ENCODE measurements at regions of chr6 and their contacts with region 1.

Region 1: GRCh38 chr6:53794720-53795253 is at the start of gene LRRC1:
- DNase-seq: peak; percentile 86
- H3K4me3 Mint-ChIP-seq: peak within 1 kb of the TSS; percentile 96
- H3K27ac Mint-ChIP-seq: peak within 1 kb of the TSS; percentile 78
- H3K4me1 Mint-ChIP-seq: peaks cover 41% of the 10 kb centered on the region
- H3K27me3 Mint-ChIP-seq: peaks cover 53% of the 10 kb centered on the region
- total RNA-seq, gene LRRC1: 1.7 and 1.9 TPM in 2 replicates

Region 2: GRCh38 chr6:53492860-53493634 is 301.7 kb before region 1 on chr6:
- intact Hi-C with region 1: loop called (anchors 1 kb)
- DNase-seq: no peak
- H3K4me3 Mint-ChIP-seq: no peak overlapping the region
- H3K27ac Mint-ChIP-seq: peak overlapping the region; percentile 25
- H3K4me1 Mint-ChIP-seq: peaks cover 15% of the 10 kb centered on the region
- H3K27me3 Mint-ChIP-seq: peaks cover 22% of the 10 kb centered on the region

Region 3: GRCh38 chr6:53846250-53846649 is 51.5 kb after region 1 on chr6:
- intact Hi-C with region 1: no loop called
- DNase-seq: no peak
- H3K4me3 Mint-ChIP-seq: no peak overlapping the region
- H3K27ac Mint-ChIP-seq: no peak overlapping the region
- H3K4me1 Mint-ChIP-seq: no peaks in the 10 kb centered on the region
- H3K27me3 Mint-ChIP-seq: no peaks in the 10 kb centered on the region

Region 4: GRCh38 chr6:53956068-53956711 is 161.4 kb after region 1 on chr6:
- intact Hi-C with region 1: loop called (anchors 1 kb)
- DNase-seq: no peak
- H3K4me3 Mint-ChIP-seq: no peak overlapping the region
- H3K27ac Mint-ChIP-seq: no peak overlapping the region
- H3K4me1 Mint-ChIP-seq: no peaks in the 10 kb centered on the region
- H3K27me3 Mint-ChIP-seq: peaks cover 2% of the 10 kb centered on the region